Activated naive CD4-positive, alpha-beta T cell treated with anti-CD3 and anti-CD28 coated beads for 36 hours (primary cell): ENCODE measurements at regions of chr10 and their contacts with region 1.

Region 1: DNA sequence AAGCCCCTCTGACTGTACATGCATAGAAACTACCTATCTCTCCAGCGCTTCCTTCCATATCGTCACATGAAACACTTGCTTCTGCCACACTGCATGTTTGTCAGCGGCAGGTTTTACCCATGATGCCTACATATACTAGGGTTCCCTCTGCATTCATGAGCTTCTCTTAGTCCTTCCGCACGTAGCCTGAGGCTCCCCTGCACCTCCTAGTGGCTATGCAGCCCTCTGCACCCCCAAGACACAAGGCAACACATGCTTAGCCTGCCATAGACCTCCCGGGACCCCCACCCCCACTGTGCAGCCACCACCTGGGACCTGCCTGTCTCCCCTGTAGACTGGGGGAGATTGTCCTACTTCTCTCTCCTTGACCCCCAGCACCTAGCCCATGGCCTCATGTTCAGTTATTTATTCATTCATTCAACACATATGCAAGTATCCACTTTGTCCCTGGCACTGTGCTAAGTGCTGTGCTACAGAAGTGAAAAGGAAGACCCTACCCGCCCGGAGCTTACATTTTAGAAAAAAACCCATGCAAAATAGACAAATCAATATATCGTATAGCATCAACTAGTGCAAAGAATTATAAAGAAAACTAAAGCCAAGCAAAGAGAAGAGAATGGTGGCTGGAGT is 23.5 kb downstream of the TMEM273 start:
- DNase-seq: peak; percentile 46
- H3K4me3 Mint-ChIP-seq: no peak overlapping the region
- H3K27ac Mint-ChIP-seq: no peak overlapping the region
- H3K4me1 Mint-ChIP-seq: no peaks in the 10 kb centered on the region
- H3K27me3 Mint-ChIP-seq: no peaks in the 10 kb centered on the region

Region 2: DNA sequence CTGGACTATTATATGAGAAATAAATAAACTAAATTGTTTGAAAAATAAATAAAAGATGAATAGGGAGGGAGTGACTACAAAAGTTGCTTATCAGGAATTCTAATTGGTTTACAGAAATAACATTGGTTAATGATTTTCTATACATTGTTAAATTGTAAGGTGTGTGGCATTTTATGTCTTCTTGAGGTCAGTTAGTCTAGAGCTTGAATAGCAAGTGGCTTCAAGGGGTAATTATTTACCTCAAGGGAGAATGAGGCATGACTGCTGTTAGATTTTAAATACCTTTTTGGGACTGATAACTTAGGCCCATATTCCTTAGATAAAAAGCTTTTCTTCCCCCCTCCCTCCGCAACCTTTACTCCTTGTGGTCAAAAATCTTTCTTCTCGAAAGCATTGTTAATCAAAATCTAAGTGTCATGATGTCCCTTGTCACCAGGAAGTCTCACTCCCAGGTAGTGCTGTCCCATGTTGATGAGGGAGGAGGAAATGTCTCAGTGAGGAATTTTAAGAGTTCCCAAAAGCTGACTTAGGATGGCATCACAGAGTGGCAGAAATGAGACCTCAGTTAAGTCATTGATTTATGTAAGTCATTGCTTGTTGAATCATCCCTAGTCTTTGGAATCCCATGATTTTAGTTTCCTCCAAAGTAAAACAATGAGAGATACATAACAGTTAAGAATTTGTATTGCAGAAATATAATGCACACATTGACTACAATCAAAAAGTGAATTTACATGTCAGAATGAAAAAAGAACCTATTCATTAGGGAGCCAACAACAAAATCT is 786.7 kb before region 1 on chr10:
- CTCF ChIA-PET with region 1: no interaction called
- intact Hi-C with region 1: no loop called
- DNase-seq: no peak
- H3K4me3 Mint-ChIP-seq: no peak overlapping the region
- H3K27ac Mint-ChIP-seq: no peak overlapping the region
- H3K4me1 Mint-ChIP-seq: no peaks in the 10 kb centered on the region
- H3K27me3 Mint-ChIP-seq: no peaks in the 10 kb centered on the region

Region 3: GRCh38 chr10:48981310-48981907 is 183.3 kb before region 1 on chr10:
- CTCF ChIA-PET with region 1: interaction called, 3 read pairs
- intact Hi-C with region 1: loop called (anchors 2 kb)
- DNase-seq: peak; percentile 45
- H3K4me3 Mint-ChIP-seq: no peak overlapping the region
- H3K27ac Mint-ChIP-seq: no peak overlapping the region
- H3K4me1 Mint-ChIP-seq: no peaks in the 10 kb centered on the region
- H3K27me3 Mint-ChIP-seq: no peaks in the 10 kb centered on the region